Sciatic nerve (tissue), 2 donors: ENCODE measurements at regions of chr4 and their contacts with region 1.

Region 1: GRCh38 chr4:189096717-189097116 is 844.0 kb upstream of the FRG1 start:
- DNase-seq: no peak
- ATAC-seq: no peak

Region 2: DNA sequence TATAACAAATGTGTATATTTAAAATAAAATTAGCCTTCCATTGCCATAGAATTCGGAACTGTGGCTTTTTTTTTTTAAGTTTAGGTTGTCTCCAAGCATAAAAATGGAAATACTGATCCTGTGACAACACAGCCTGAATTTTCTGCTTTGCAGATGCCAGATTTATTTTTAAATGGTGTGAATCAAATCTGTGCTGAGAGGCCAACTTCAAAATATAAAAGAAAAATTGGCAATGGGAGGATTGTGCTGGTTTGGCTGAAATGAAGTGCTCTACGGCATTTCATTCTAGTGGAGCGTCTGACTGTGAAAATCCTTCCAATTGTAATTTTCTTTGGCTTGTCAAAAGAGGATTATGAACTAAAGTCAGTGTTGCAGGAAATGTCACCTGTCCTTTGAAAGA is 1681.5 kb before region 1 on chr4:
- intact Hi-C with region 1: no loop called
- DNase-seq: no peak
- ATAC-seq: no peak

Region 3: DNA sequence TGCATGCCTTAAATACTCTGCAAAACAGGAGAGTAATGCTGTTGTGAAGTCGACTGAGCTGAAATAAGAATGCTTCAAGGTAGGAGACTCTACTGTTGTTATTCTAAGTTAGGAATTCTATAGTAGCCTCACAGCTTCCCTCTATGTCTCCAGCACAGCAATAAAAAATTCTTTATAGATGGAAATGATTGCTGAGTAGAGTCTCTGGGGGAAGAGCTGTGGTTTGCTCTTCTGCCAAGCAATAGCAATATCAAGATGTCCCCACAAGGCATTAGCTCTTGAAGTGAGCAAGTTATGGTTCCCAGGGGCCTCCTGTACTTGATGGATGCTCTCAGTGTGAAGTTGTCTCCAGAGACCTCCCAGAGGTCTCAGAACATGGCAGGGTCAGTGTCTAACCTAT is 36.6 kb before region 1 on chr4:
- intact Hi-C with region 1: loop called (anchors 2 kb)
- DNase-seq: no peak
- ATAC-seq: no peak